OCI-LY7 (cell line): ENCODE measurements at regions of chr3 and their contacts with region 1.

Region 1: DNA sequence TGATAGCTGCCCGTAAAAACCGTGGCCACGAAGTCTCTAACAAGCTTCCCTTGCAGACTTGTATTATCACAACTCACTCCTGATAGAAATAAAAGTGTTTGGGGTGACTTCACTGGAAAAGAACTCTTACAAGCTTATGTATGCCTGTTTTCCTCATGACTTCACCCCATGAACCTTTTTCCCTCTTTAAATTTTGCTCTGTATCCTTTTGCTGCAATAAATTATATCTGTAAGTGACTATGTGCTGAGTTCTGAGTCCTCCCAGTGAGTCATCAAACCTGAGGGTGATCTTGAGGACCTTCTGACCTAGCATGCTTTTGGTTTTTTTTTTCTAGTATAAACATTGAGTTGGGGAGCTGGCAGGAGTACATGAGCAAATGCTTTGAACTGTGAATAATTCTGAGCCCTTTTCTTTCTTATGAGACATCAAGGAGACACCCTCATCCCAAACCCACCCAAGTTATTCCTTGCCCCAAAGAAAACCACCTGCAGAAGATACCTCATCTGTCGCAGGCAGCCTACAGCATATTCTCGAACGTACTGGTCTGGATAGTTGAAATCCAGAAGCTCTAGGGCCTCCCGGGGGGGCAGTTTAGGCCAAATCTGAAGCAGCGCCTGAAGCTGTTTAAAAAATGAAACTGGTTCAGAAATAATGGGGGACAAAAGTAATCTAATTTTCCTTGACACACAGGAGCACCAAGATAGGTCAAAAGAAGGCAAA is 85.9 kb downstream of the FAIM start:
- DNase-seq: no peak
- H3K4me3 ChIP-seq: no peak overlapping the region
- H3K27ac ChIP-seq: no peak overlapping the region
- H3K4me1 ChIP-seq: no peaks in the 10 kb centered on the region
- CTCF ChIP-seq: no peak

Region 2: DNA sequence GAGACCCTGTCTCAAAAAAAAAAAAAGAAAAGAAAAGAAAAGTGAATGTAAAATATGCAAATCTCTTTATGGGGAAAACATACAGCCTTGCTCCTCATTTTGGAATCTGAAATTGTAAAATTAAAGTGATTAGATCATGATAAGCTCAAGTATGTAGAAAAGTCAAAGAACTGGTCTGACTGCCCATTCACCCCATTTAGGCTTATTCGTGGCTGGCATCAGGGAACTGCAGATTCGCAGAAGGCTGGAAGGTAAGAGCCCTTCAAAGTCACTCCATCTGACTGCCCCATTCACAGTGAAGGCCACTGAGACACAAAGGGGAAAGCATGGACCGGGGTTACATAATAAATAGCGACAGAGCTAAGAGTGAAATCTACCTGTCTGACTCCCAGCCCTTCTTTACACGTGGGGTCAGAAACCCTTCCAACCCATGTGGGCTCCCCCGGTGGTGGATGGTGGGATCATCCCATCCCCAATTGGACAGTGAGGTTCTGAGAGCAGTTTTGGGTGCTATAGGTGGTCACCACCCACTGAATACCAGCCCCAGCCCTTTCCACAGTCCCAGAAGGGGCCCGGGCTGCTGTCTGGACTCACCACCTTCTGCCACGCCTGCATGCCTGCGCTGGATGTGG is 597.2 kb before region 1 on chr3:
- CTCF ChIA-PET with region 1: no interaction called
- POLR2A ChIA-PET with region 1: no interaction called
- intact Hi-C with region 1: no loop called
- DNase-seq: no peak
- H3K4me3 ChIP-seq: no peak overlapping the region
- H3K27ac ChIP-seq: no peak overlapping the region
- H3K4me1 ChIP-seq: no peaks in the 10 kb centered on the region
- CTCF ChIP-seq: peak; percentile 58

Region 3: GRCh38 chr3:138834359-138835212 is 140.1 kb after region 1 on chr3 and contains the start of gene PIK3CB:
- CTCF ChIA-PET with region 1: no interaction called
- POLR2A ChIA-PET with region 1: interaction called, 3 read pairs
- intact Hi-C with region 1: loop called (anchors 10 kb)
- DNase-seq: peak; percentile 89
- H3K4me3 ChIP-seq: peak within 1 kb of the TSS; percentile 85
- H3K27ac ChIP-seq: peak within 1 kb of the TSS; percentile 74
- H3K4me1 ChIP-seq: peaks cover 16% of the 10 kb centered on the region
- CTCF ChIP-seq: peak; percentile 71
- total RNA-seq, gene PIK3CB: 7.1 and 8.2 TPM in 2 replicates